CD8-positive, alpha-beta T cell (primary cell): ENCODE measurements at regions of chr7 and their contacts with region 1.

Region 1: GRCh38 chr7:99558306-99559174 is at the start of gene ZNF655:
- DNase-seq: peak; percentile 83 to 97 (median 93)
- ATAC-seq: peak; percentile 81
- H3K4me3 ChIP-seq: peak within 1 kb of the TSS; percentile 72 to 97
- H3K4me3 Mint-ChIP-seq: peak within 1 kb of the TSS; percentile 98
- H3K27ac ChIP-seq: peak within 1 kb of the TSS; percentile 98 to 99
- H3K27ac Mint-ChIP-seq: peak within 1 kb of the TSS; percentile 98
- H3K4me1 ChIP-seq: peaks cover 40% of the 10 kb centered on the region
- H3K4me1 Mint-ChIP-seq: peaks cover 57% of the 10 kb centered on the region
- H3K27me3 ChIP-seq: no peaks in the 10 kb centered on the region
- H3K27me3 Mint-ChIP-seq: no peaks in the 10 kb centered on the region
- CTCF ChIP-seq: no peak
- total RNA-seq, gene ZNF655: 177 to 186 TPM

Region 2: DNA sequence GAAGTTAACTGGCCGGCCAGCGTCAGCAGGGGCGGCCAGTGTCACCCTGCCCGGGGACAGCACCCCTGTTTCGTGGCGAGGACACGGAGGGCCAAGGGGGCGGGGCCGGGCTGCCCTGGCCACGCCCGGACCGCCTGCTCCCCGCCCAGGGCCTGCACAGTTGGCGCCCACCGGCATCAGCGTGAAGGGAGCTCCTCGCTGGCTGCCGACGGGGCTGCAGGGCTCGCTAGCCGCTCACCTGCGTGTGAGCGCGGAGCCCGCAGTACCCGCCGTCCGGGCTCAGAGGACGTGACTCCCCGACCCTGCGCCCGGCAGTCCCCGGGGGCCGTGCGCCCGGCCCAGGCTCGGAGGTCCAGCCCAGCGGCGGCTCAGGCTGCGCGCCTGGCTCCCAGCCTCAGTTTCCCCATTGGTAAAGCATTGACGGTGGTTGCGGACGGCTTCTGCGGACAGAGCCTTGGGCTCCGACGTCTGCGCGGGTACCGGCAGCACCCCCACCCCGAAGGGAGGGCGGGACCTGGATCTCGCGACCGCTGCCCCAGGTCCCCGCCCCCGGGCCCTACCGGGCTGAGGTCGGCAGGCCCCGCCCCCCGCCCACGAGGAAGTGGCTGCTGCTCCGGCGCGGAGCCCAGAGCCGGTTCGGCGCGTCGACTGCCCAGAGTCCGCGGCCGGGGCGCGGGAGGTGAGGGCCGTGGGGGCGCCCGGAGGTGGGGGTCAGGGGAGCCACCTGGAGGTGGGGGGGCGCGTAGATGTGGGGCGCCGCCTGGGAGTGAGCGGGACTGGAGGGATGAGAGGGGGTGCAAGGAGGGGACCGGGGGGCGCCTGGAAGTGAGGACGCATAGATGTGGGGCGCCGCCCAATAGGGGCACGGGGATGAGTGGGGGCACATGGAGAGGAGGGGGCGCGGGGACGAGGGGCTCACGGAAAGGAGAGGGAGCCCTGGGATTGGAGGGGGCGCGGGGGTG is 184.2 kb before region 1 on chr7 and contains the start of gene ARPC1B:
- CTCF ChIA-PET with region 1: no interaction called
- POLR2A ChIA-PET with region 1: no interaction called
- intact Hi-C with region 1: loop called in 1 of 2 experiments (anchors 1 kb)
- DNase-seq: peak; percentile 69 to 94 (median 86)
- ATAC-seq: peak; percentile 55
- H3K4me3 ChIP-seq: peak within 1 kb of the TSS; percentile 70 to 90
- H3K4me3 Mint-ChIP-seq: peak within 1 kb of the TSS; percentile 84
- H3K27ac ChIP-seq: peak within 1 kb of the TSS; percentile 84 to 91
- H3K27ac Mint-ChIP-seq: peak within 1 kb of the TSS; percentile 96
- H3K4me1 ChIP-seq: peaks cover 55% of the 10 kb centered on the region
- H3K4me1 Mint-ChIP-seq: peaks cover 36% of the 10 kb centered on the region
- H3K27me3 ChIP-seq: no peaks in the 10 kb centered on the region
- H3K27me3 Mint-ChIP-seq: no peaks in the 10 kb centered on the region
- CTCF ChIP-seq: no peak
- total RNA-seq, gene ARPC1B: 68.5 to 70.5 TPM

Region 3: GRCh38 chr7:99472561-99473243 is 85.8 kb before region 1 on chr7 and contains the start of gene ZNF789:
- CTCF ChIA-PET with region 1: no interaction called
- POLR2A ChIA-PET with region 1: interaction called, 9 read pairs
- intact Hi-C with region 1: loop called (anchors 1 to 2 kb)
- DNase-seq: peak; percentile 96 to 99 (median 98)
- ATAC-seq: peak; percentile 97
- H3K4me3 ChIP-seq: peak within 1 kb of the TSS; percentile 75 to 93
- H3K4me3 Mint-ChIP-seq: peak within 1 kb of the TSS; percentile 98
- H3K27ac ChIP-seq: peak within 1 kb of the TSS; percentile 60 to 88
- H3K27ac Mint-ChIP-seq: peak within 1 kb of the TSS; percentile 96
- H3K4me1 ChIP-seq: peaks cover 19% of the 10 kb centered on the region
- H3K4me1 Mint-ChIP-seq: peaks cover 36% of the 10 kb centered on the region
- H3K27me3 ChIP-seq: no peaks in the 10 kb centered on the region
- H3K27me3 Mint-ChIP-seq: no peaks in the 10 kb centered on the region
- CTCF ChIP-seq: no peak
- total RNA-seq, gene ZNF789: 12.9 to 14.1 TPM

Region 4: DNA sequence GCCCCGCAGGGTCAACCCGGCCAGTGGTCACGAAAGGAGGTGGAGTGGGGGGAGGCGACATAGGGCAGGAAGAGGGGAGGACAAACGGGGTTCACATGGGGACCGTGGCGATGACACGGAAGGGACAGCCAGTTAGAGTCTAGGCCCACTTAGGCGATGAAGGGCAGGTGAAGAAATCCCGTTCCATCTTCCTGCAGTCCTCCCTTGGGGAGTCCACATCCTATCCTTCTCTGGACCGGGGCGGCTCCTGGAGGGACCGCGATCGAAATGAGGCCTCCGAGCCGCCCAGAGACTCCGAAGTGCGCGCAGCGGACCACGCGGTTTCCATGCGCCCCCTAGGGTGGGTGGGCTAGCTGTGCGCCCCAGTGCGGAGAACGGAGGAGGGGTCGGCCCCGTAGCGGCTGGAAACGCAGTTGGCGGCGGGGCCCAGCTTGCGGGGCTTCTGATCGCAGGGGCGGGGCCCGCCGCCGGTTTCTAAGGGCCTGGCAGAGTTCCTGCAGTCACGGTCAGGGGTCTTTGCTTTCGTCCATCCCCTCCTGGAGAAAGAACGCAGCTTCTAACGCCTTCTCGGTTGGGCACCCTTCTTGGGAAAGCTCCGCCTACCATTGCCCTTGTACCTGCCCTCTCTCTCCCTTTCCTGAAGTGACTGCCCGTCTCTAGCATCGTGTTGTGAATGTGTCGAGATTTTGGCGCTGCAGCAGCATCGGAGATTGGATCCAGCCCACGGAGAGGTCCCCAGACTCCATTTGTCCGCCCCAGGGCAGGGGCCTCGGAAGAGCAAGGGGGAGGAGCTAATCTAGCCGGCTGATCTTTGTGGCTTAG is 21.6 kb after region 1 on chr7:
- CTCF ChIA-PET with region 1: no interaction called
- POLR2A ChIA-PET with region 1: interaction called, 21 read pairs
- intact Hi-C with region 1: loop called in 1 of 2 experiments (anchors 2 kb)
- DNase-seq: peak; percentile 24 to 79 (median 69)
- ATAC-seq: peak; percentile 91
- H3K4me3 ChIP-seq: peak overlapping the region; percentile 63 to 84
- H3K4me3 Mint-ChIP-seq: peak overlapping the region; percentile 93
- H3K27ac ChIP-seq: peak overlapping the region; percentile 4 to 42
- H3K27ac Mint-ChIP-seq: peak overlapping the region; percentile 87
- H3K4me1 ChIP-seq: no peaks in the 10 kb centered on the region
- H3K4me1 Mint-ChIP-seq: peaks cover 18% of the 10 kb centered on the region
- H3K27me3 ChIP-seq: no peaks in the 10 kb centered on the region
- H3K27me3 Mint-ChIP-seq: no peaks in the 10 kb centered on the region
- CTCF ChIP-seq: peak; percentile 54

Region 5: GRCh38 chr7:99616359-99617191 is 58.0 kb after region 1 on chr7 and contains the start of gene ZSCAN25:
- CTCF ChIA-PET with region 1: interaction called, 3 read pairs
- POLR2A ChIA-PET with region 1: interaction called, 29 read pairs
- intact Hi-C with region 1: loop called (anchors 1 kb)
- DNase-seq: peak; percentile 66 to 93 (median 86)
- ATAC-seq: peak; percentile 97
- H3K4me3 ChIP-seq: peak within 1 kb of the TSS; percentile 78 to 94
- H3K4me3 Mint-ChIP-seq: peak within 1 kb of the TSS; percentile 97
- H3K27ac ChIP-seq: peak within 1 kb of the TSS; percentile 86 to 87
- H3K27ac Mint-ChIP-seq: peak within 1 kb of the TSS; percentile 98
- H3K4me1 ChIP-seq: peaks cover 25% of the 10 kb centered on the region
- H3K4me1 Mint-ChIP-seq: peaks cover 45% of the 10 kb centered on the region
- H3K27me3 ChIP-seq: no peaks in the 10 kb centered on the region
- H3K27me3 Mint-ChIP-seq: no peaks in the 10 kb centered on the region
- CTCF ChIP-seq: no peak
- total RNA-seq, gene ZSCAN25: 54.1 to 54.7 TPM

Region 6: DNA sequence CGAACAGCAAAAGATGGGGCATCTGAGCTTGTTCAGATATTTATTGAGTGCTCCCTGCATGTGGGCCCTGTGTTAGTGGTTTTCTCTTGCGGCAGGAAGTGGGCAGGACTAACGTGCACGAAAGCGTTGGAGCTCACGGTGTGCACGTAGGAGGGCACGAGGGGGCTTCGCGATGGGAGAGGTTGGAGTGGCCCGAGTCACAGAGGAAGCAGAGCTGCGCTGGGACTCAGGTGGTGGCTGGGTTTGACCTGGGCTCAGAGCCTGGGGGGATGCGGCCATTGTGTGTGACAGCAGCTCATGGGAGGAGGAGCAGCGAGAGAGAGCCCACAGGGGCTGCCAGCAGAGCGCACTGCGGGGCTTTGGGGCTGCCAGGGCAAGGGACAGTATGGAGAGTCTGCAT is 65.9 kb after region 1 on chr7:
- CTCF ChIA-PET with region 1: interaction called, 3 read pairs
- POLR2A ChIA-PET with region 1: interaction called, 35 read pairs
- intact Hi-C with region 1: loop called in 1 of 2 experiments (anchors 2 kb)
- DNase-seq: peak; percentile 57 to 96 (median 78)
- ATAC-seq: peak; percentile 92
- H3K4me3 ChIP-seq: peak overlapping the region; percentile 33 to 51
- H3K4me3 Mint-ChIP-seq: peak overlapping the region; percentile 90
- H3K27ac ChIP-seq: peak overlapping the region; percentile 71 to 87
- H3K27ac Mint-ChIP-seq: peak overlapping the region; percentile 99
- H3K4me1 ChIP-seq: peaks cover 36% of the 10 kb centered on the region
- H3K4me1 Mint-ChIP-seq: peaks cover 60% of the 10 kb centered on the region
- H3K27me3 ChIP-seq: no peaks in the 10 kb centered on the region
- H3K27me3 Mint-ChIP-seq: no peaks in the 10 kb centered on the region
- CTCF ChIP-seq: no peak

Region 7: GRCh38 chr7:100015232-100016209 is 457.0 kb after region 1 on chr7 and contains the start of gene ZKSCAN1:
- CTCF ChIA-PET with region 1: no interaction called
- POLR2A ChIA-PET with region 1: interaction called, 4 read pairs
- intact Hi-C with region 1: loop called in 1 of 2 experiments (anchors 5 kb)
- DNase-seq: peak; percentile 67 to 95 (median 83)
- ATAC-seq: peak; percentile 91
- H3K4me3 ChIP-seq: peak within 1 kb of the TSS; percentile 61 to 100
- H3K4me3 Mint-ChIP-seq: peak within 1 kb of the TSS; percentile 95
- H3K27ac ChIP-seq: peak within 1 kb of the TSS; percentile 82 to 97
- H3K27ac Mint-ChIP-seq: peak within 1 kb of the TSS; percentile 98
- H3K4me1 ChIP-seq: peaks cover 22% of the 10 kb centered on the region
- H3K4me1 Mint-ChIP-seq: peaks cover 52% of the 10 kb centered on the region
- H3K27me3 ChIP-seq: no peaks in the 10 kb centered on the region
- H3K27me3 Mint-ChIP-seq: no peaks in the 10 kb centered on the region
- CTCF ChIP-seq: no peak
- total RNA-seq, gene ZKSCAN1: 30.0 to 35.9 TPM